Transverse colon (tissue), 4 donors: ENCODE measurements at regions of chr7 and their contacts with region 1.

Region 1: DNA sequence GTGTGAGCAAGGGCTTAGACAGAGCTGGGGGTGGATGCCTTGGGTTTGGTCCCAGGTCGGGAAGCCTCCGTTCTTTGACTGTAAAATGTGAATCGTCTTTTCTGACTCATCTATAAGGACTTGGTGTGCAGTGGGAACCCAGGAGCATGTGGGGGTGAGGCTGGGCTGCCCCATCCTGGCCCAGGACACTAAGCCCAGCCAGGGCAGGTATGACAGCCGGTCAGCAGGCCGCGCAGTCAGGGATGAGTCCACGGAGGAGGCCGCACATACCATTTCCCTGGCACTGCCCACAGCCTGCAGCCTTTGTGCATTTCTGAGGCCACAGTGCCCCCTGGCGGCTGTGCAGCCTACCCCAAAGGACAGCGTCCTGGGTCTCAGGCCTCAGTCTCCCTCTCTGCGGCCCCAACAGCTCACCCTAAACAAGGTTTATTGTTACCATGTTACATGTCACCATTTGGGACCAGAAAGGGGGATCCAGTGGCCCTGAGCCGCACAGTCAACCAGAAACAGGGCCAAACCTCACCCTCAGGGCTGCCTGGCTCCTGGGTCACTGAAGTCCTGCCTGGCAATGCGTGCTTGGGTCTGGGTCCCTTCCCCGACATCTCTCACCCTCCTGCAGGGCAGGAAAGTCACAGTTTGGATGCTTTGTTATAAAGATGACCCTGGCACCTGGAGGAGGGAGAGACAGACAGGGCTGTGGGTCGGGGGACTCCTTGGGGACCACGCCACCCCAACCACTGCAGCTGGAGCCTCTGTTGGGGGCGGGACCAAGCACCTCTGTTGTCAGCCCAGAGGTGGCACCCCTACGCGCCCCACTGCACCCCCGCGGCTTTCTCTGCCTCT is 14.4 kb upstream of the SH2B2 start:
- DNase-seq: peak; percentile 83
- H3K4me3 ChIP-seq: no peak overlapping the region
- H3K27ac ChIP-seq: no peak overlapping the region
- H3K4me1 ChIP-seq: peaks cover 0 to 11% (median 2%) of the 10 kb centered on the region in 4 donors
- H3K27me3 ChIP-seq: no peaks in the 10 kb centered on the region
- CTCF ChIP-seq: peak; percentile 90 to 93 (median 90)
- EP300 ChIP-seq: no peak
- POLR2A ChIP-seq: no peak

Region 2: DNA sequence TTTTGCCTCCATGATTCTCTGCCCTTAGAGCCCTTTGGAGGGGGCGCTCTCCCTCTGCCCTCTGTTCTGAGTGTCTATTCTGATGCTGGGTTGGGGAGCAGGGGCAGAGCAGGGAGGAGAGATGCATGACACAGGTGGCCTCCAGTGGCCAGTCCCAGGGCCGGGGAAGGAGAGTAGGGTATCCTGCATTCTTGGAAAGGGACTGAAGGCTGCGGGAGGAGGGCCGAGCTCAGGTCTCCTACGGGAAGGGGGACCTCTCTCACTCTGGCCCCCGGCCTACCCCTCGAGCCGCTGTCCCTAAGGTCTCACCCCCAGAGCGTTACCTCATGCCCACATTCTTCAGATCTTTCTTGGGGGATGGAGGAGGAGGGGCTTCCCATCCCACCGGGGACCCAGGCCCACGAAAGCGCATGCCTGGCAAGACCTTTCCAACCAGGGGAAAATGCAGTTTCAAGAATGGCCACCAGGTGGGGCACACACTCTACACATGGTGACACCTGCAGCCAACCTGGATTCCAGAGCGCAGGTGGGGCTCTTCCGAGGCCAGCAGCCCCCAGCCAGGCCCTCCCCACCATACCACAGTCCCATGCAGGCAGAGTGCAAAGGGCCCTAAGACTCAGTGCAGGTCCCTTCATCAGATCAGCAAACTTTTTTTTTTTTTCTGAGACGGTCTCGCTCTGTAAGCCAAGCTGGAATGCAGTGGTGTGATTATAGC is 729.6 kb before region 1 on chr7:
- in situ Hi-C with region 1: loop called (anchors 5 to 10 kb)
- intact Hi-C with region 1: loop called (anchors 5 kb)
- DNase-seq: peak; percentile 79
- H3K4me3 ChIP-seq: no peak overlapping the region
- H3K27ac ChIP-seq: no peak overlapping the region
- H3K4me1 ChIP-seq: peaks cover 0 to 4% (median 0%) of the 10 kb centered on the region in 4 donors
- H3K27me3 ChIP-seq: no peaks in the 10 kb centered on the region
- CTCF ChIP-seq: peak; percentile 92 to 94 (median 94)
- EP300 ChIP-seq: no peak
- POLR2A ChIP-seq: no peak

Region 3: DNA sequence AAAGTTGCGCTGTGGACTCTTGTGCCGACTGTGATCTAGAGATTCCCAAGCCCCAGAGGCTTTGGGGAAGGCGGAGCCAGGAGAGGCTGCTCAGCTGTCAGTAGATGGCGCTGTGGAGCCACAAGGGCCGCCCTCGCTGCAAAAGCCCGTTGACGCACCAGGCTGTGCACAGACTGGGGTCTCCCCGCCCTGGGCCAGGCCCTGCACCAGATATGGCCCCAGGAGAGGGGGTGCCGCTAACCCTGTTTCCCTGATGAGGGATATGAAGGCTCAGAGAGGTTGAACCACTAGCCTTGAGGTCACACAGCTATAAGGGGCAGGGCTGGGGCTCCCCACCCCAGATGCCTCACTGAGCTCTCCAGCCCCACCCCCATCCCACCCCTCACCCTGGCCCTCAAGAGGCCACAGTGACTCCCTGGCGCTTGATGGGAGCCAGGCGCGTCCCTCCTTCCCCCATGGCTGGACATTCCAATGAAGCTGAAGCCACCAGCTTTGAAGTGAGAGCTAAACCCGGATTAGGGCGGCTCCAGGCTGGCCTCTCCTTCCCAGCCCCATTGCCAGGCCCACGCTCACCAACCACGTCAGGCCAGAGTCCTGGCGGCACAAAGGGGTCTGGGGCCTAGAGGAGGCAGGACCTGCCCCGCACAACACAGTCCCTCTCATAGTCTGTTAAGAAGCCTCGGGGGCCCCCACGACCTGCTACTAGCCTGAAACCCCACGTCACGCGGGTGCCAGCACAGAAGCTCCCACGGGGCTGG is 669.6 kb before region 1 on chr7:
- in situ Hi-C with region 1: no loop called
- intact Hi-C with region 1: loop called (anchors 2 kb)
- DNase-seq: peak; percentile 83
- H3K4me3 ChIP-seq: no peak overlapping the region
- H3K27ac ChIP-seq: no peak overlapping the region
- H3K4me1 ChIP-seq: peaks cover 3 to 16% (median 14%) of the 10 kb centered on the region in 4 donors
- H3K27me3 ChIP-seq: no peaks in the 10 kb centered on the region
- CTCF ChIP-seq: peak; percentile 72 to 92 (median 82)
- EP300 ChIP-seq: no peak
- POLR2A ChIP-seq: no peak